ENCODE measurements at regions of chr12 and their contacts with region 1.

Region 1: GRCh38 chr12:3299929-3300832 is 190.8 kb upstream of the PRMT8 start:
- DNase-seq: peak; percentile 72
- H3K4me3 Mint-ChIP-seq: no peak overlapping the region
- H3K27ac Mint-ChIP-seq: peak overlapping the region; percentile 50
- H3K4me1 Mint-ChIP-seq: peaks cover 11% of the 10 kb centered on the region
- H3K27me3 Mint-ChIP-seq: peaks cover 2% of the 10 kb centered on the region

Region 2: DNA sequence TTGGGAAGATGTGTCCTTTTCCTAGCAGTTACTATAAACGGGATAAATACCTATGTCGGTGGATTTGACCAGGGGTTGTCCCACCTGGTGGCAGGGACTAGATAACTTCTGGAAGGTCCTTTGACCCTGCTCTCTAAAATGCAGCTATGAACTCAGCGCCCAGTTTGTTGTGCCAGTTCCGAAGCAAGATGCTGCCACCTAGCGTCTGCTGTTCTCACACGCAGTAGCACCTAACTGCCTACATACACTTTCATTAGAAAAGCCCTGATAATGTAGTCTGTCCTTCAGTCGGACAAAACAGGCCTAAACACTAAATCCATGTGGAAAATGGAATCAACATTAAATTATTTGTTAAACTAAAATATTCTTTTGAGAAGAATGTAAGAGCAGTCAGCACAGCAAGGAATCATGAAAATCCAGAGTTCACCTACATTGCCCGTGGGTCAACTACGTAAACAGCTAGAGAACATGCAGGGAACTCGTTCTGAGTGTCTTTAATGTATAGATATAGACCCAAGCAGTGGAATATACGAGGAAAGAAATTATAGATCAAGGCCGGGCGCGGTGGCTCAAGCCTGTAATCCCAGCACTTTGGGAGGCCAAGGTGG is 503.8 kb after region 1 on chr12:
- intact Hi-C with region 1: loop called (anchors 1 kb)
- DNase-seq: peak; percentile 51
- H3K4me3 Mint-ChIP-seq: no peak overlapping the region
- H3K27ac Mint-ChIP-seq: no peak overlapping the region
- H3K4me1 Mint-ChIP-seq: peaks cover 6% of the 10 kb centered on the region
- H3K27me3 Mint-ChIP-seq: no peaks in the 10 kb centered on the region

Measured in activated T-helper 2 cell treated with anti-CD3 and anti-CD28 coated beads, Interferon-gamma antibody, Interleukin-2, Interleukin-4, amounts not matched to agents 10 μg/mL and 5 μg/mL and 100 μg/mL, durations not matched to agents 14 hours and 24 hours and 36 hours (primary cell).